BJ (cell line): ENCODE measurements at regions of chr15 and their contacts with region 1.

Region 1: DNA sequence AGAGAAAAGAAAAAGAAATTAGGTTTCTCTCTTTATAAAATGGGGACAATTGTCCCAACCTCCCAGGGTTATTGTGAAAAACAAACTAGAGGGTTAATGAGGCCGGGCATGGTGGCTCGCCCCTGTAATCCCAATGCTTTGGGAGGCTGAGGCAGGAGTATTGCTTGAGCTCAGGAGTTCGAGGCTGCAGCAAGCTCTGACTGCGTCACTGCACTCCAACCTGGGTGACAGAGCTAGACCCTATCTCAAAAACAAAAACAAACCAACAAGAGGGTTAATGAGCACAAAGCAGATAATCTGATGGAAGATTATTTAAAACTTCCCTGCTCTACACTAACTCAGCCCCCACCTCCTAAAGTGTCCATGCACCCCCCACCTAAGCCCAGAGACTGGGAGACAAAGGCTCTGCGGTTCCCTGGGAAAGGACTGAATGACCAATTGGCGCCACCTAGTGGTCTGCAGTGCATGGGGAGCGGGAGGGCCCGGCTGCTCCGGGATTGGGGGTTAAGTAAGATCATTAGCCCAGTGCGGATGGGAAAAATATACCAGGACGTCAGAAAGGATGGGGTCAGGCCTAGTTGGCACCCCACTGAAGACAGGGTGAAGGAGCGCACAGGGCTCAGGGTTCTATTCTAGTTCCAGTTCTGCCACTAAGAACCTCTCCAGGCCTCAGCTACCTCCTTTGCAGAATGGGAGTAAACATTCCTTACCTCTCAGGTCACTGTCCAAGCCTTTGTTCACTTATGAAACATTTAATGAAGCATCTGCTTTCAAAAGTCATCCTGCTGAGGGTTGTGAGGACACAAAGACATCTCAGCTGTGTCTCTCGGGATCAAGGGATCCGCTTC is 15.6 kb downstream of the PIF1 start:
- DNase-seq: no peak
- H3K4me3 ChIP-seq: no peak overlapping the region
- H3K27me3 ChIP-seq: peaks cover 1% of the 10 kb centered on the region; the same call in 1 of the 2 replicates
- CTCF ChIP-seq: peak; percentile 98

Region 2: DNA sequence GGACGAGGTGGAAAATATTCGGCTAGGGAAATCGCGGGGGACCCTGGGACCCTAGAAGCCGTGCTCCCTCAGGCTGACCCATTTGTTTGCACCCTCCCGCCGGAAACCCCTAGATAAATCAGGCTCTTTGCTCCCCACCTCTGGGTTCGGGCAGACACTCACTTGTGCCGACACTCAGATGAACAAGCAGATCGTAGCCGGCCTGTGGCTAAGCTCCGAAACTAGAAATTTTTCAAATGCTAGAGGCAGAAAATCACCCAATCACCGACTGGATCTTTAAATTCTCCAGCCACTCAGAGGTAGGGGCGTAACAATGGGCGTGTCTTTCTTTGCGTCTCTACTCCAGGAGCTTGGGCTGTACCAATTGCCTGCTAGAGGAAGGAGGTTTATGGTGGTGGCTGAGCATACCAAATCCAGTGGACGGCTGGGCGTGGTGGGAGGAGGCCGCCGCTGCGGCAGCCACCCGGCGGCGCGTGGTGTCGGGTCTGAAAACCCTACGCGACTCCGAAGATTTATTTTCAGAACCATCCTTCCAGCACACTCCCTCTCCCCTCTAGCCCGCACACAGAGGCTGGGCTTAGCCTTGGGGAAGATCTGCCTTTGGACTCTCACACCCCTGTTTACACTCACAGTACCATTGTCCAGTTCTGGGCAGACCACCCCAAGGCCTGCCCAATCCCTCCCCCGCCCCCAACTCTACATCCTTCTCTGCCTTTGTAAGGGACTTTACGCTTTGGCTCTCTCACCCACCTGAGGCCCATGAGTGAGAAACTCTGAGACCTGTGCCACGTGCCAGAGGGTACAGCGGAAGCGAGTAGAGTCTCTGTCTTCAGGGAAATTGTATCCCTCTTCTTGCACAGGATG is 15.8 kb after region 1 on chr15 and contains the start of gene PIF1:
- CTCF ChIA-PET with region 1: interaction called, 19 read pairs
- POLR2A ChIA-PET with region 1: no interaction called
- DNase-seq: peak; percentile 93
- H3K4me3 ChIP-seq: peak within 1 kb of the TSS; percentile 54
- H3K27me3 ChIP-seq: no peaks in the 10 kb centered on the region
- CTCF ChIP-seq: 0 out of 2 replicates have a peak, but pooled peaks have one; percentile 4
- polyA plus RNA-seq, gene PIF1: 7.5 and 10.8 TPM in 2 replicates

Region 3: GRCh38 chr15:64905119-64905831 is 95.4 kb after region 1 on chr15:
- CTCF ChIA-PET with region 1: interaction called, 17 read pairs
- POLR2A ChIA-PET with region 1: no interaction called
- DNase-seq: no peak
- H3K4me3 ChIP-seq: peak overlapping the region; percentile 7
- H3K27me3 ChIP-seq: no peaks in the 10 kb centered on the region
- CTCF ChIP-seq: peak; percentile 87

Region 4: GRCh38 chr15:64911311-64912191 is 101.7 kb after region 1 on chr15 and contains the start of gene ANKDD1A:
- CTCF ChIA-PET with region 1: interaction called, 17 read pairs
- POLR2A ChIA-PET with region 1: no interaction called
- DNase-seq: no peak
- H3K4me3 ChIP-seq: peak within 1 kb of the TSS; percentile 69
- H3K27me3 ChIP-seq: no peaks in the 10 kb centered on the region
- CTCF ChIP-seq: no peak
- polyA plus RNA-seq, gene ANKDD1A: 2.9 and 4.9 TPM in 2 replicates

Region 5: DNA sequence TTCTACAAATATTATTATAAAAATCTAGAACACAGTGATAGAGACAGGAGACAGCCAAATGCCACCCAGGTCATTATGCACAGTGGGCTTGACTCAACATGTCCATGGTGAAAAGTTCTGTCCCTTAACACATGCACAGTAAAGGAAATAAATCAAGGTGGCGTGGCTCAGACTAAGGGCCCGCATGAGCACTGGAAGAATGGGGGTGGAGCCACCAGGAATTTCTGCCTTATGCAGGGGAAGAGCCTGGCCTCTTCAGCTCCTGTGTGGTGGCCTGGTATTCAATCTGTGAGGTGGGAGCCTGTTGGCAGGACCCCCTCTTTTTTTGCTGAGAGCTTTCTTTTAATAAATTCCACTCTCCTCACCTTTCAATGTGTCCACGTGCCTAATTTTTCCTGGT is 197.0 kb after region 1 on chr15:
- CTCF ChIA-PET with region 1: no interaction called
- POLR2A ChIA-PET with region 1: no interaction called
- DNase-seq: no peak
- H3K4me3 ChIP-seq: no peak overlapping the region
- H3K27me3 ChIP-seq: no peaks in the 10 kb centered on the region
- CTCF ChIP-seq: no peak